ENCODE measurements at regions of chr6 and their contacts with region 1.

Region 1: GRCh38 chr6:117602151-117602898 is at the start of gene GOPC:
- DNase-seq: peak; percentile 99
- H3K4me3 Mint-ChIP-seq: peak within 1 kb of the TSS; percentile 95
- H3K27ac Mint-ChIP-seq: peak within 1 kb of the TSS; percentile 96
- H3K4me1 Mint-ChIP-seq: peaks cover 17% of the 10 kb centered on the region
- H3K27me3 Mint-ChIP-seq: no peaks in the 10 kb centered on the region
- CTCF ChIP-seq: no peak
- total RNA-seq, gene GOPC: 53.2 and 55.7 TPM in 2 replicates

Region 2: GRCh38 chr6:116969211-116969863 is 633.0 kb before region 1 on chr6:
- CTCF ChIA-PET with region 1: interaction called, 4 read pairs
- POLR2A ChIA-PET with region 1: no interaction called
- intact Hi-C with region 1: loop called (anchors 2 kb)
- DNase-seq: peak; percentile 74
- H3K4me3 Mint-ChIP-seq: no peak overlapping the region
- H3K27ac Mint-ChIP-seq: no peak overlapping the region
- H3K4me1 Mint-ChIP-seq: no peaks in the 10 kb centered on the region
- H3K27me3 Mint-ChIP-seq: peaks cover 63% of the 10 kb centered on the region
- CTCF ChIP-seq: peak; percentile 59

Region 3: DNA sequence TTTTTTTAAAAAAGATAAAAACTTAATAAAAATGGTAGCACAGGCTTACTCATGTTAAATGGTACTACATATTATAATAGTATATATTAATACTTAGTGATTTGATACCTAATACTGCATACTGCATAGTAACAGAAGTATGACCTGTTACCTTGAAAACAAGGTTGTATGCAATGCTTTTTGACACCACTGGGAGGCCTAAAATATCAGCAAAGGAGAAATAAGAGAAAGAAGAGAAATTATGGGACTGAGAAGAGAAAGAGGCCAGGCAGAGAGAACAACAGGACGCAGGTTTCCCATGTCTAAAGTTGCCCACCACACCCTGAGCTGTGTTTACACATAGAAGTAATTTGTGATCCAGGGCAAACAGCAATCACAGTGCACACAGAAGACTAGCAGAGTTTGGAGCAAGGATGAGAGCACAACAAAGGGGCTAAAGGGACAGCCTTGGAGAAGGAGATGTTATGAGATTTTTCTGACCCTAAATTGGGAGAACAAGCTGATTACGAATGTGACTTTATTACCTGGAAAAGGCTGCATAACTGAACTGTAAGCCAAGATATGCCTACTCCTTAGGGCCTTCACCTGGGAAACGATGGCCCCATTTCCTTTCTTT is 249.8 kb before region 1 on chr6:
- CTCF ChIA-PET with region 1: interaction called, 28 read pairs
- POLR2A ChIA-PET with region 1: no interaction called
- intact Hi-C with region 1: loop called (anchors 2 kb)
- DNase-seq: peak; percentile 32
- H3K4me3 Mint-ChIP-seq: no peak overlapping the region
- H3K27ac Mint-ChIP-seq: peak overlapping the region; percentile 56
- H3K4me1 Mint-ChIP-seq: peaks cover 6% of the 10 kb centered on the region
- H3K27me3 Mint-ChIP-seq: no peaks in the 10 kb centered on the region
- CTCF ChIP-seq: peak; percentile 42

Region 4: DNA sequence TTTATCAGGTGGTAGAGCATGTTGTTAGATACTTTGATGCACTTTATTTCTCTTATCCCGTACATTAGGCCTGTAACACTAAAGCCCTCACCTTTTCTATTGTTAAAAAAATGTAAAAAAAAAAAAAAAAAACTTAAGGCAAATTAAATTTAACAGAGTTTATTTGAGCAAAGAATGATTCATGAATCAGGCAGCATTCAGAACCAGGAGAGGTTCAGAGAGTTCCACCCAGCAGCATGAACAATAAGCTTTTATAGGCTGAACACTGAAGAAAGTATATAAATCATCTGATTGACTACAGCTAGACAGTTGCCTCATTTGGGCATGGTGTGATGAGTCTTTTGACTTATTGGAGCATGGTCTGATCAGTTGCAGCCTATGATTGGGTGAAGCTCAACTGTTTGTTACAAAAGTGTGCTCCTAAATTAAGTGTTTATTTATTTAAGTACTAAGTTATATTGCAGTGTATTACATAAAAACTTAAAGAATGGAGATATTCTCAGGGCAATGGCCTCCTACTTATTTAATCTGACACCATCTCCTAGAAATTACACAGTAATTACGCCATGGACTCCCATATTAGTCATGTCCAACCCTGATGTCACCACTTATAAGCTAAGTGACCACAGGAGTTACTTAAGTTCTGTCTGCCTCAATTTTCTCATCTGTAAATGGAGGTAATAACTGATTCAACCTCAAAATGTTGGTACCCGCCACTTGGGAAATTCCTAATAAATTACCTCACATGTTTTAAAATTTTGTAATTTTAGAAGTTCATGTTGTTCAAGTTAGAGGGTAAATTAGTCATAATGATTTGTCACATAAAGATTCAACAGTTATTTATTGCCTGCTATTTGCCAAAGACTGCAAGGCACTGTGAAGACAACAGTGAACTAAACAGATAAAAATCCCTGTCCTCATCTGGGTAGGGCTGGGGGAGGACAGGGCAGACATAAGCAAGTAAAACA is 161.5 kb before region 1 on chr6:
- CTCF ChIA-PET with region 1: interaction called, 11 read pairs
- POLR2A ChIA-PET with region 1: interaction called, 22 read pairs
- intact Hi-C with region 1: no loop called
- DNase-seq: peak; percentile 93
- H3K4me3 Mint-ChIP-seq: peak overlapping the region; percentile 66
- H3K27ac Mint-ChIP-seq: peak overlapping the region; percentile 97
- H3K4me1 Mint-ChIP-seq: peaks cover 44% of the 10 kb centered on the region
- H3K27me3 Mint-ChIP-seq: no peaks in the 10 kb centered on the region
- CTCF ChIP-seq: no peak

Region 5: GRCh38 chr6:117498159-117498558 is 104.2 kb before region 1 on chr6:
- CTCF ChIA-PET with region 1: interaction called, 5 read pairs
- POLR2A ChIA-PET with region 1: interaction called, 26 read pairs
- intact Hi-C with region 1: no loop called
- DNase-seq: peak; percentile 80
- H3K4me3 Mint-ChIP-seq: peak overlapping the region; percentile 57
- H3K27ac Mint-ChIP-seq: peak overlapping the region; percentile 98
- H3K4me1 Mint-ChIP-seq: peaks cover 60% of the 10 kb centered on the region
- H3K27me3 Mint-ChIP-seq: no peaks in the 10 kb centered on the region
- CTCF ChIP-seq: no peak

Region 6: DNA sequence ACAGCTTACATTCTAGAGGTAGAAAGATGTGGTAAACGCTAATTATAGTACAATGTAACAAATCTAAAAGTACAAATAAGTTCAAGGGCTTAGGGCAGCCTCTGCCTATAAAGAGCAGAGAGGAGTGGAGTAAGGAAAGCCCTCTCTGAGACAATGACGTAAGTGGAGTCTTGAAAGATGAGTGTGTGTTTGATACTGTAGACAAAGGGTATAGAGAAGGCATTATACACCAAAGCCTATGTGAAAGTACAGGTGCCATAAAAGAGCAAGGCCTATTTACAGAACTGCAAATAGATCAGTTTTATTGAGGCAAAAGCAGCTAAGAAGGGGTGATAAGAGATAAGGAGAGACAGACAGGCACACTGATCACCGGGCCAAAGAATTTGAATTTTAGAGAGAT is 10.9 kb before region 1 on chr6:
- CTCF ChIA-PET with region 1: interaction called, 19 read pairs
- POLR2A ChIA-PET with region 1: interaction called, 10 read pairs
- intact Hi-C with region 1: no loop called
- DNase-seq: no peak
- H3K4me3 Mint-ChIP-seq: no peak overlapping the region
- H3K27ac Mint-ChIP-seq: peak overlapping the region; percentile 11
- H3K4me1 Mint-ChIP-seq: peaks cover 11% of the 10 kb centered on the region
- H3K27me3 Mint-ChIP-seq: no peaks in the 10 kb centered on the region
- CTCF ChIP-seq: no peak

Region 7: GRCh38 chr6:117739869-117740268 is 137.5 kb after region 1 on chr6:
- CTCF ChIA-PET with region 1: no interaction called
- POLR2A ChIA-PET with region 1: no interaction called
- intact Hi-C with region 1: no loop called
- DNase-seq: no peak
- H3K4me3 Mint-ChIP-seq: no peak overlapping the region
- H3K27ac Mint-ChIP-seq: no peak overlapping the region
- H3K4me1 Mint-ChIP-seq: no peaks in the 10 kb centered on the region
- H3K27me3 Mint-ChIP-seq: peaks cover 11% of the 10 kb centered on the region
- CTCF ChIP-seq: no peak

Region 8: DNA sequence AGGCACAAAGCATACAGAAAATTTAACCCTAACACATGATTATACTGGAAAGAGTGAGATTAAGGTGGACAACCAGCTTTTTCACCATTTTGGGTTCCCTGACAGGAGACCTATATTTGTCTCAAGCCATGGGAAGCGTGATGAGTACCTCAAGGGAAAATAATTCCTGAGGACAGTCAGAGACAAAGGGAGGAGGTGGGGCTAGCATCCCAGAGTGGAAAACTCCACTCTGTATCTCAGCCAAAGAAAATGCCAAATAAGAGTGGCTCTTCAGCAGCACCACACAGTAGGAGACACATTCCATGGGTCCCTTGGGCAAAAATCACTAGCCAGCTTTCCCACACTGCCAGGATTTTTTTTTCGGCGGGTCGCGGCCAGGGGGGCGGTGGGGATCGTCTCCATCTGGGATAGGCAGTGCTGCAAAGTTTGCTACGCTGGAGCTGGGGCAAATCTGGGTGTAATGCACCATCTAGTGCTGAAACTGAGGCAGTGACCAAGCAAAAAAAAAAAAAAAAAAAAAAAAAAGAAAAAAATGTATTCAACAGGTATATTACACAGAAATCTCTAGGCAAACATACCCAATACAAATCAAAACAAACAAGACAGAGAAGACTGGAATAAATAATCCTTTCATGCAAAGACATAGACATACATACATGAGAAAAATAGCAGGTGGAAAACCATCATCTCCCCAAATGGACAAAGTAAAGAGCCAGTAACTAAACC is 227.4 kb after region 1 on chr6:
- CTCF ChIA-PET with region 1: interaction called, 16 read pairs
- POLR2A ChIA-PET with region 1: no interaction called
- intact Hi-C with region 1: loop called (anchors 5 kb)
- DNase-seq: peak; percentile 59
- H3K4me3 Mint-ChIP-seq: peak overlapping the region; percentile 37
- H3K27ac Mint-ChIP-seq: no peak overlapping the region
- H3K4me1 Mint-ChIP-seq: peaks cover 4% of the 10 kb centered on the region
- H3K27me3 Mint-ChIP-seq: peaks cover 90% of the 10 kb centered on the region
- CTCF ChIP-seq: peak; percentile 52